Dorsolateral prefrontal cortex (tissue), 120 donors: ENCODE measurements at regions of chr10 and their contacts with region 1.

Region 1: DNA sequence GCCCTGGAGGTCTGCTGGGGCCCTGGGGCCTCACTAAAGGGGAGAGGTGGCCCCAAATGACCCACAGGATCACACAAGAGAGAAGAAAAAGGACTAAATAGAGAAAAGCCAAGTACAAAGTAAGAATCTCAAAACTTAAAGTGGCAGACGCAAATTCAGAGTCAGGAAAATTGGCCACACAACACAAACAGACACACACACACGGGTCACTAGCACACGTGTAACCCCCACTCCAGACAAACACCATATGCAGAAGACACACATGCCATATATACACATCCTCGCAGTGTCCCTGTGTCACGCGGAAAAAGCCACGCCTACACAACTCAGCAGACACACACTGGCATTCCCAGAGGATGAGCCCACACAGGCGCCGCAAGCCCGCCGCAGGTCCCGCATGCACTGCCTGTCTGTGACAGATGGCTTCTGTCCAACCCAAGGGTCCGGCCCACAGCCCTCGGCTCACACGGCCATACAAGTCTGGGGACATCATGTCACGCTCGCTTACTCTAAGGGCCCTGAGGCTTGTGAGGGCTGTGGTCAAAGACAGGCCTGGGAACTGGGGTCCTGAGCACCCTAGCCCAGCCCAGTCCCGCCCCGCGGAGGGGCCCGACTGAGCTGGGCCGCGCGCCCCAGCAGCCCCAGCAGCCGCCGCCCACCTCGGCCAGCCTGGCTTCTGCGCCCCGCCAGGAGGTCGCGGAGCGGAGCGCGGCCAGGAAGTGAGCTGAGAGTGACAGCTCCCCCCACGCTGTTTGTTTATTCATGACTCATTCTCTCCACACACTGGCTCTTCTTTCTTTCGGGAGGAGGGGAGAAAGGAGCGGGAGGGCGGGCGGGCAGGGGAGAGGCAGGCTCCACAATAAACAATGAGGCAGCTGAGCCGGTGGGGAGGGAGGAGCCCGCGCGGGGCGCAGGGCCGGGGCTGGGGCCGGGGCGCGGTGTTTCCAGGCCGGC is 95.5 kb upstream of the ZMIZ1 start:
- DNase-seq: peak; percentile 74 to 89 (median 84)
- H3K4me3 ChIP-seq: peak overlapping the region; percentile 24 to 71 (median 57)
- H3K27ac ChIP-seq: peak overlapping the region; percentile 85 to 99 (median 98)
- H3K27me3 ChIP-seq: no peaks in the 10 kb centered on the region
- CTCF ChIP-seq: peak in 1 of 56 donors; percentile 47

Region 2: DNA sequence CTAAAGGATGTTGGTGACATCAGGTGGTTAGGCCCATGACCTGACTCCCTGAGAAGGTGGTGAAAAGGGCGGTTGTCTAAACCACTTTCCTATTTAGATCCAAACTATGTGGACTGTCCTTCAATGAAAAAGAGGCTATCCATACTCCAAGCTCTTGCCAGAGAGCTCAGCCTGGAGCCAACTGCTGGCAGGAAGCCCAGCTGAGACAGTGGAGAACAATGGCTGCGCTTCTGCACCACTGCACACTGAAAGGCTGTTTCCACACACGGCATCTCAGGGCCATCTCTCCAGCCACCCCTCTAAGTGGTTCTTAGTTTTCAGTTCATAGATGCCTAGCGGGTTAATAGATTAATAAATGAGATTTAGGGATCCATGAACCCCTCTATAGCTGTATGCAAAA is 393.2 kb before region 1 on chr10:
- intact Hi-C with region 1: loop called (anchors 2 to 5 kb)
- DNase-seq: peak; percentile 82 to 94 (median 87)
- H3K4me3 ChIP-seq: no peak overlapping the region
- H3K27ac ChIP-seq: peak overlapping the region in 53 of 59 donors; percentile 13 to 88 (median 67)
- H3K27me3 ChIP-seq: no peaks in the 10 kb centered on the region
- CTCF ChIP-seq: peak in 13 of 56 donors; percentile 8 to 50 (median 14)

Region 3: DNA sequence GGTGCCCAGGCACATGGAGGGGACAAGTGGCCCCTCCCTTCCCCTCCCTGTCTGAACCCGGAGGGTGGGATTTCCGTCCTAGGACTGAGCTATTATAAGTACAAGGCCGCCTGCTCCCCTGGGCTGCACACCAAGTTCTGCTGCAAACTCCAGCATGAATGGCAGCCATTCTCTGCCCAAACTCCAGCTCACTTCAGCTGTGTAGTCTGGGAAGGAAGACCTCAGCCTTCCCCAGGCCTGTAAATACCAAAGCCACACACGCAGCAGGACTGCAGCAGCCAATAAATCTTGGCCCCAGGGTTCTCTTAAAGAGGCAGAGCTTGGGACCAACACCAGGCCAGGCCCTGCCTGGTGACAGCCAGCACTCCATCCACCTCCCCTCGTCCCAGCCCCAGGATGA is 195.8 kb before region 1 on chr10:
- intact Hi-C with region 1: loop called (anchors 5 to 10 kb)
- DNase-seq: peak; percentile 19 to 89 (median 80)
- H3K4me3 ChIP-seq: no peak overlapping the region
- H3K27ac ChIP-seq: peak overlapping the region in 57 of 59 donors; percentile 3 to 92 (median 73)
- H3K27me3 ChIP-seq: no peaks in the 10 kb centered on the region
- CTCF ChIP-seq: peak in 13 of 56 donors; percentile 6 to 43 (median 11)

Region 4: GRCh38 chr10:78856421-78856820 is 116.8 kb before region 1 on chr10:
- intact Hi-C with region 1: loop called (anchors 2 to 5 kb)
- DNase-seq: peak; percentile 19 to 93 (median 88)
- H3K4me3 ChIP-seq: no peak overlapping the region
- H3K27ac ChIP-seq: peak overlapping the region in 1 of 59 donors; percentile 29
- H3K27me3 ChIP-seq: no peaks in the 10 kb centered on the region
- CTCF ChIP-seq: peak in 12 of 56 donors; percentile 10 to 45 (median 24)

Region 5: DNA sequence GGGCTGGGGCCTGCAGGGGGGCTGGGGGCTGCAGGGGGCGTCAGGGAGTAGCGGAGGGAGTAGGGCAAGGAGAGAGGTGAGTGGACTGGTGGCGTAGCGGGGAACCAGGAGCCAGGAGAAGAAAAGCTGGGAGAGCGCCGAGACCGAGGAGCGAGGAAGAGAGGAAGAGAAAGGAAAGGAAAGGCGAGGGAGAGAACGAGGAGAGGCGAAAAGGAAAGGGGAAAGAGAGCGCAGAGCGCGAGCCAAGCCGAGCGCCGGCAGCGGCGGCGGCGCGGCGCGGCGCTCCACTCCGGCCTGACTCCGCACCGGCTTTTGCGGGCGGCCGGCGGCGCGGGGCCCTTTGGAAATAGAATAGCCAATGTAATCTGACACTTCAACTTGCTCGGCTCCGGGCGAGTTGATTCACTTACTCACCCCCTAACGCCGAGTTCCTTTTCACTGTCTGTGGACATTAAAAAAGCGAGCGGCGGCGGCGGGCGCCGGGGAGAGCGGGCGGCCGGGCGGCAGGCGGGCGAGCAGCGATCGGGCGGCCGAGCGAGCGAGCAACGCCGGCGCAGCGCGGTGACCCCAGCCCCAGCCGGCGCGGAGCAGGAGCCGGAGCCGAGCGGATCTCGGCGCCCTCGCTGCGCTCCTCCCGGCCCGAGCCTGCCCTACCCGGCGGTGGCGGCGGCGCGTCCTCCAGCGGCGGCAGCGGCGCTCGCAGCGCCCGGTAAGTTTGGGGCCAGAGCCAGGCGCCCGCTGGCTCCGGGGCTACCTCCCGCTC is 95.5 kb after region 1 on chr10 and contains the start of gene ZMIZ1:
- intact Hi-C with region 1: loop called (anchors 1 kb)
- DNase-seq: peak; percentile 73 to 92 (median 86)
- H3K4me3 ChIP-seq: peak within 1 kb of the TSS; percentile 60 to 94 (median 81)
- H3K27ac ChIP-seq: peak within 1 kb of the TSS; percentile 53 to 99 (median 93)
- H3K27me3 ChIP-seq: no peaks in the 10 kb centered on the region
- CTCF ChIP-seq: peak in 29 of 56 donors; percentile 2 to 52 (median 17)
- total RNA-seq, gene ZMIZ1: 67.5 to 153 (median 96.5) TPM